ENCODE measurements at regions of chr20 and their contacts with region 1.

Region 1: DNA sequence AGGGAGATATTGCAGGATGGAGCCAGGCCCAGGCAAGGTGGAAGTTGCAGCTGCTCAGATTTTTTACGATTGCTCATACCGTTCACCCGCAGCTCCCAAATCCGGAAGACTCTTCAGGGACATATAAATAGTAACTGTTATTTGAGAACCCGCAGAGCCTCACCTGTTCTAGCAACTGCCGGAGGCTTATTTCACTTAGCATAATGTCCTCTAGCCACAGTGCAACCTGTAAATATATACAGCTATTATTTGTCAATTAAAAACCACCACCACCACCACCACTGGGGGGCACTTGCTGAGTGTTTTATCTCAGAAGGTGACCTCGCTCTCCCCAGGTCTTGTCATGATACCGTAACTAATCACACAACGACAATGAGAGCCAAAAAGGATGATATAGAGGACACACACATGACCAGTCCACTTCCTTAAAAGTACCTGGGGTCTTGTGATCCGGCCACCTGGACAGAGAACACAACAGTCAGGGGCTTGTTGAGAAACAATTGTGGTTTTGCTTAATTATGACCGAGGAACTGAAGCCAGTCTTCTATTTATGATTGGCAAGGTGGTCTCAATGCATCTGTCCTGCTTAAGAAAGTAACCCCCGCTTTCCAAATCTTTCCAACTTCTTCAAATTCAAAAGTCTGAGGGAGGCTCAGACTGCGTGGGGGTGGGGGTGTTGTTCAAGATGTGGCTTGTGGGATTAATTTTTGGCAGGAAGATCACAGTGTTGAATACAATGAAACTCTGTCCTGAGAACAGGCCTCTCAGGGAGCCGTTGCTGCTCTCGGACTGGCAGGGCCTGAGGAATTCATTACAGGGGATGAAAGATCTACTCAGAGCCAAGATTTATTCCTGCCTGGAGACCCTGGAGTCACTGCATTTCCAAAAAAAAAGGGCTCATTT is 107.7 kb upstream of the PRND start:
- H3K4me3 Mint-ChIP-seq: peak overlapping the region; percentile 11
- H3K27ac Mint-ChIP-seq: peak overlapping the region; percentile 44
- H3K4me1 Mint-ChIP-seq: peaks cover 33% of the 10 kb centered on the region
- H3K27me3 Mint-ChIP-seq: no peaks in the 10 kb centered on the region

Region 2: DNA sequence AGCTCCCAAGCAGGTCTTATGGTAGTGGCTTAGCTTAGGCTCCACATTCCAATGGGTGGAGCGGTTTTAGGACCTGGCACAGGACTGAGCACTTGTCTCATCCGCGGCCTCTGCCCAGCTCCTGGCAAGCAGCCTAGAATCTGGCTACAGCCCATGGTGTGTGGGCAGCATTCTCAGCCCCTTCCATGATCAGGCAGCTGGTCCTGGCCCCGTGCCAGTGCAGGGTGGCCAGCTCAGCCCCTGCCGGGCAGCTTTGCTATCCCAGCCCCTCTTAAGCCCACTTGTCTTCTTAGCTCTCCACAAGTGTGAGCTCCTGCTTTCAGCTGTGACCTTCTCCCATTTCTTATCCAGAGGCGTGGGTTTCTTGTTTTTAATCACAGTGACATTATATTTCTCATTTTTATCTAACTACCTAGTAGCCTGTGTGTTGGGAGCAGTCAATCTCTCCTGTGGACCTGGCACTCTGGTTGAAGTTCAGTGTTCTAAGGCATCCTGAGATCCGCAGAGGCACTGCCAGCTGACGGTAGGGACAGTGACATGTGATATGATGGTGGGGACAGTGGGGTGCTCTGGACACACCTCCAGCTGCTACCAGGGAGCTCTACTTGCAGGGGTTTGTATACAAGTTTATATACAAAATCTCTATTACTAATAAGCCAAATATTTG is 12.2 kb before region 1 on chr20:
- intact Hi-C with region 1: no loop called
- H3K4me3 Mint-ChIP-seq: no peak overlapping the region
- H3K27ac Mint-ChIP-seq: no peak overlapping the region
- H3K4me1 Mint-ChIP-seq: no peaks in the 10 kb centered on the region
- H3K27me3 Mint-ChIP-seq: peaks cover 23% of the 10 kb centered on the region

Region 3: DNA sequence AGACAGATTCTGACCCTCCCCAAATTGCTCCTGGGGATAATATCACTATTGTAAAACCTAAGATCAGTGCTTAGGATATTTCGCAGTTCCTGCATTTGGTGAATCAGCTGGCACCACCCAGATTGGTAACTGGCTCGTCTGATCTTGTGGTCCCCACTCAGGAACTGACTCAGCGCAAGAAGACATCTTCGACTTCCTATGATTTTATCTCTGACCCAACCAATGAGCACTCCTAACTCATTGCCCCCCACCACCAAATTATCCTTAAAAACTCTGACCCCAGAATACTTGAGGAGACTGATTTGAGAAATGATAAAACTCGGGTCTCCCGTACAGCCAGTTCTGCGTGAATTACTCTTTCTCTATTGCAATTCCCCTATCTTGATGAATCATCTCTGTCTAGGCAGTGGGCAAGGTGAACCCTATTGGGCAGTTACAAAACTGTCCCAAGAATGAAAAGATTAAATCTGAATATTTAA is 52.1 kb after region 1 on chr20:
- intact Hi-C with region 1: loop called (anchors 5 kb)
- H3K4me3 Mint-ChIP-seq: peak overlapping the region; percentile 17
- H3K27ac Mint-ChIP-seq: peak overlapping the region; percentile 85
- H3K4me1 Mint-ChIP-seq: peaks cover 57% of the 10 kb centered on the region
- H3K27me3 Mint-ChIP-seq: no peaks in the 10 kb centered on the region

Region 4: GRCh38 chr20:4720041-4720976 is 106.3 kb after region 1 on chr20:
- intact Hi-C with region 1: loop called (anchors 1 kb)
- H3K4me3 Mint-ChIP-seq: peak overlapping the region; percentile 58
- H3K27ac Mint-ChIP-seq: peak overlapping the region; percentile 96
- H3K4me1 Mint-ChIP-seq: peaks cover 33% of the 10 kb centered on the region
- H3K27me3 Mint-ChIP-seq: peaks cover 5% of the 10 kb centered on the region